Left lung (tissue), 14 donors: ENCODE measurements at regions of chr5 and their contacts with region 1.

Region 1: DNA sequence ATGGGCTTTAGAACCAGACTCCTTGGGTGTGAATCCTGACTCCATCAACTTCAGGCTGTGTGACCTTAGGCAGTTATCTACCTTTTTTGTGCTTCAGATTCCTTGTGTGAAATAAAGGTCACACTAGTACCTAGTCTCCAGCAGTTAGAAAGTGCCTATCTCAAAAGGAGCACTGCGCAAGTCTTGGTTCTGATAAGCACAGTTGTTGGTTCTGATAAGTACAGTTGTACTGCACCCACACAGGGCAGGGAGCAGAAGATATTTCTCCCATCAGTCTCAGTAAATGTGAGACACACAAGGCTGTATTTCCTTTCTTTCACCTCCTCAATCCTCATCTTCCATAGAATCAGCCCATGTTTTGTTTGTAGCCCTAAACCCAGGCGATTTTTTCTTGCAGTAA is 116.6 kb upstream of the DPYSL3 start:
- DNase-seq: no peak
- ATAC-seq: no peak
- H3K4me3 ChIP-seq: no peak overlapping the region
- H3K27ac ChIP-seq: no peak overlapping the region
- H3K4me1 ChIP-seq: no peaks in the 10 kb centered on the region
- H3K27me3 ChIP-seq: no peaks in the 10 kb centered on the region
- CTCF ChIP-seq: no peak

Region 2: GRCh38 chr5:147369742-147370374 is 256.6 kb before region 1 on chr5:
- intact Hi-C with region 1: no loop called
- DNase-seq: no peak
- ATAC-seq: peak; percentile 78
- H3K4me3 ChIP-seq: no peak overlapping the region
- H3K27ac ChIP-seq: no peak overlapping the region
- H3K4me1 ChIP-seq: no peaks in the 10 kb centered on the region
- H3K27me3 ChIP-seq: no peaks in the 10 kb centered on the region
- CTCF ChIP-seq: peak in 1 of 2 donors; percentile 56

Region 3: DNA sequence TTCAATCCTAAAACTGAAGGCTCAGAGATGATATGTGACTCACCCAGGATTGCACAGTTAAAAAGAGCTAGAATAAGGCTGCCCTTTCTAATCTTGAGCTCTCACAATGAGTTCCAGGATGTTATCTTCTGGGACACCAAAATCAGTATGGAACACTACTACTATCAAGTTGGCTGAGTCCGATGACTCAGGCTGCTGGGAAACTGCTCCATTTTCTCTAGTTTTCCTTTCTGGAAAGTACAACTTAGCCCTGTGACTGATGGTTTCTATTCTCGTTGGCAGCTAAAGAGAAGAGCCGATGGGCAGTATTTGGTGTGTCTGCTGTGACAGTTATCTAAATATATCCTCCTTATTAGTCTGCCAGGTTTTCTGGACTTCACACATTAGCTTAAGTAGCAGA is 78.7 kb before region 1 on chr5:
- intact Hi-C with region 1: no loop called
- DNase-seq: no peak
- ATAC-seq: peak; percentile 47
- H3K4me3 ChIP-seq: no peak overlapping the region
- H3K27ac ChIP-seq: peak overlapping the region; percentile 35 to 37
- H3K4me1 ChIP-seq: no peaks in the 10 kb centered on the region
- H3K27me3 ChIP-seq: no peaks in the 10 kb centered on the region
- CTCF ChIP-seq: no peak

Region 4: DNA sequence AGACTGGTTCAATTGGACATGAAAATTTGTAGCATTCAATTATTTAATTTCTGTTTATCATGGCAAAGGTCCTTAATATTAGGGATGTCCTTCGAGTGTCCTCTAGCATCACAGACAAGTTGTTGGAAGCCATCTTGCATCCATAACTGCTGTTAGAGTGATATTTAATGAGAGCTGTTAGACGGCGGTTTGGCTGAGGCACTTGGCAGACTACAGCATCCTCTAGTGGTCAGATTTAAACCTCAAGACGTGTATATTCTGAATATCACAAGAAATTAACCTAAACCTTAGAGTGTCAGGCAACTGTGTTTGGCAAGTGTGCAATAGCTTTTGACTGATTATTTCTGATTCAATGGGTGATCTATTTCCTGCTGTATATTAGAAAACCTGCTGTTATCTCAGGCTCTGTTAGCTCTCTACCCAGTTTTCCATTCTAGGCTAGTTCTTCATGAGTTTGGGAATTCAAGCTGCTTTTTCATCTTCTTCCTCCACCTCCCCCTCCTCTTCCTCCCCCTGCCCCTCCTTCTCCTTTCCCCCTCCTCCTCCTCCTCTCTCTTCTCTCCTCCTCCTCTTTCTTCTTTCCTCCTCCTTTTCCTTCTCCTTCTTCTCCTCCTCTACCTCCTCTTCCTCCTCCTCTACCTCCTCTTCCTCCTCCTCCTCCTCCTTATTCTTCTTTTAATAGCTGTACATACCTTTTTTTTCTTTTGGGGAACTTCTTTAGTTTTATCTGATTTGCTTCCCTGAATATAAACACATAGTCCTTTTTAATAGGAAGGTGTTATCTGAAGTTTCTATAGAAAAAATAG is 196.4 kb after region 1 on chr5:
- intact Hi-C with region 1: loop called in 1 of 2 experiments (anchors 2 kb)
- DNase-seq: peak in 2 of 4 donors; percentile 68 to 81
- ATAC-seq: peak; percentile 94
- H3K4me3 ChIP-seq: no peak overlapping the region
- H3K27ac ChIP-seq: no peak overlapping the region
- H3K4me1 ChIP-seq: no peaks in the 10 kb centered on the region
- H3K27me3 ChIP-seq: no peaks in the 10 kb centered on the region
- CTCF ChIP-seq: peak; percentile 53 to 92

Region 5: DNA sequence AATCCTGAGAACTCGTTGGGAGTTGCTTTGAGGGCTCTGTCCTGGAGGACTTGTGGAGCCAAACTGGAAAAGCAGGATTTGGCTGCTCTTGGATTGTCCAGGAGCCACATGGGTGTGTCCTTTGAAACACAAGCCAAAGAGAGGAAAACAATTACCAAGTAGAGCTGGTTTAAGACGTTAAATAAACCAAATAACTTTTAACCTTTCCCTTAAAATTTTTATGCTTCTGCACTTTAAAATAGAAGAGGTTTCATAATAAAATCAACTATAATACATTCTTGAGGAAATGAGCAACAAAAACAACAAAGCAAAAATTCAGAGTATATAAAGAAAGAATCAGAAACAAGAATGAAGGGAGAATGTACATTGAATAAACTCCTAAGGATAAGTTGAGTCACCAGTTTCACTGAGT is 266.4 kb after region 1 on chr5:
- intact Hi-C with region 1: no loop called
- DNase-seq: peak in 2 of 4 donors; percentile 55 to 68
- ATAC-seq: peak; percentile 93
- H3K4me3 ChIP-seq: no peak overlapping the region
- H3K27ac ChIP-seq: no peak overlapping the region
- H3K4me1 ChIP-seq: no peaks in the 10 kb centered on the region
- H3K27me3 ChIP-seq: no peaks in the 10 kb centered on the region
- CTCF ChIP-seq: no peak

Region 6: DNA sequence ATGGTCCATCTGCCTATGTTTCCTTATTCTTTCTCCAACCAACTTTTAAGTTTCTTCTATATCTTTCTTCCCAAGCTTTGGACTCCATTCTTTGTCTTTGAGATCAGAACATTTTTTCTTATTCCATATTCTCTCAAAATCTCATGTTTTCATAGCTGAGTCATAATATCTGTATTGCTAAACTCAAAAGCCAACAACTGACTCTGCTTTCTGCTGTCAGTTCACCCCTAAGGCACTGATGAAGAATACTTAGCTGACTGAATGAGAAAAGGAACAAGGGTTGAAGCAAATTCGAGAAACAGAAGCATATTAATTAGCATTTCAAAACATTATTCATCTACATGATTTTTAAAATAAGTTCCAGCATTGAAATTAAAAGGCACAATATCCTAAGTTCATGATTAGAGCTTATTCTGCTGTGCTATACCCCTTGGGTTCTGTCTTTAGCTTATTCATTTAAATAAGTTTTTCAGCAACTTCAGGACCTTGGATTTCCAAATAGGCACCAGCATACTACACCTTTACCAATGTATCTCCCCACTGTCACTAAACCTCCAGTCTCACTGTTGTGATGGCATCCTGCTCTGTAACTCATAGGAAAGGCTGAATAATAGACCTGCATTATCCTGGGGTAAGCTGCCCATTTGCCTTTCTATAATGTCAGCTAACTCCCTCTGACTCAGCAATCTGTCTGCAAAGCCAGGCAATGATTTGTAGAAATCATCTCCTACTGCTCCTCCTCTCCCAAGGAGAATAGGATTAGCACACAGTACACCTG is 329.8 kb after region 1 on chr5:
- intact Hi-C with region 1: no loop called
- DNase-seq: no peak
- ATAC-seq: no peak
- H3K4me3 ChIP-seq: no peak overlapping the region
- H3K27ac ChIP-seq: no peak overlapping the region
- H3K4me1 ChIP-seq: no peaks in the 10 kb centered on the region
- H3K27me3 ChIP-seq: no peaks in the 10 kb centered on the region
- CTCF ChIP-seq: no peak